ENCODE measurements at regions of chr12 and their contacts with region 1.

Region 1: GRCh38 chr12:57520053-57520871 is at the start of gene DDIT3:
- DNase-seq: peak; percentile 91
- ATAC-seq: peak; percentile 83
- H3K4me3 ChIP-seq: peak within 1 kb of the TSS; percentile 98
- H3K27ac ChIP-seq: peak within 1 kb of the TSS; percentile 99
- H3K4me1 ChIP-seq: peaks cover 29% of the 10 kb centered on the region
- H3K27me3 ChIP-seq: no peaks in the 10 kb centered on the region
- CTCF ChIP-seq: no peak
- EP300 ChIP-seq: peak in 1 of 2 experiments; percentile 58; a peak in 2 of 4 replicates
- POLR2A ChIP-seq: peak; percentile 91
- RAD21 ChIP-seq: no peak
- polyA plus RNA-seq, gene DDIT3: 26.8 to 28.9 TPM

Region 2: GRCh38 chr12:57476162-57476992 is 43.9 kb before region 1 on chr12:
- CTCF ChIA-PET with region 1: interaction called, 14 read pairs
- POLR2A ChIA-PET with region 1: interaction called, 11 read pairs
- RAD21 ChIA-PET with region 1: interaction called, 9 read pairs
- SMC1A ChIA-PET with region 1: interaction called, 9 read pairs
- in situ Hi-C with region 1: no loop called
- intact Hi-C with region 1: loop called (anchors 5 kb)
- DNase-seq: no peak
- ATAC-seq: peak; percentile 62
- H3K4me3 ChIP-seq: peak overlapping the region; percentile 92
- H3K27ac ChIP-seq: peak overlapping the region; percentile 85
- H3K4me1 ChIP-seq: peaks cover 34% of the 10 kb centered on the region
- H3K27me3 ChIP-seq: no peaks in the 10 kb centered on the region
- CTCF ChIP-seq: peak; percentile 48 to 81 (median 72)
- EP300 ChIP-seq: no peak
- POLR2A ChIP-seq: peak; percentile 73
- RAD21 ChIP-seq: peak; percentile 43

Region 3: DNA sequence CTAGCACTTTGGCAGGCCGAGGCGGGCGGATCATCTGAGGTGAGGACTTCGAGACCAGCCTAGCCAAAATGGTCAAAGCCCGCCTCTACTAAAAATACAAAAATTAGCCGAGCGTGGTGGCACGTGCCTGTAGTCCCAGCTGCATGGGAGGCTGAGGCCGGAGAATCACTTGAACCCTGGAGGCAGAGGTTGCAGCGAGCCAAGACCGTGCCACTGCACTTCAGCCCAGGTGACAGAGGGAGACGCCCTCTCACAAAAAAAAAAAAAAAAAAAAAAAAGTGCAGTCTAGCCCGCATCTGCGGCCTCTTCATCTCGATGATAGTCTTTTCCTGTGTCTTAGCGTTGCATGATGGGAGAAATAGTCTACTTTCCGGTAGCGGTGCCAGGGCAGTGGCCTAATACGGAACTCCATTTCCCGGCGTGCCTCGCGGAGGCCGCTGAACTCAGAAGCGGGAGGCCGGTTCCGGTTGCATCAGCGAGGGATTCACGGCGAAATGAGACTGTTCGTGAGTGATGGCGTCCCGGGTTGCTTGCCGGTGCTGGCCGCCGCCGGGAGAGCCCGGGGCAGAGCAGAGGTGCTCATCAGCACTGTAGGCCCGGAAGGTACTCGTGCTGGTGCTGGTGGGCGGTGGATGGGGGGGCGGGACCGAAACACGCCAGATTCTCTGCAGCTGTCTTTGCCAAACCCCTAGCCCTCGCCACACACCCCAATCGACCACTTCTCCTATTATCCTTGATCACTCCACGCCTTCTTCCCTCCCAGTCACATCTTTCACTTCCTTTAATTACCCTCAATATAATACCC is 32.5 kb before region 1 on chr12 and contains the start of gene MARS1:
- CTCF ChIA-PET with region 1: no interaction called
- POLR2A ChIA-PET with region 1: interaction called, 10 read pairs
- RAD21 ChIA-PET with region 1: interaction called, 3 read pairs
- SMC1A ChIA-PET with region 1: no interaction called
- in situ Hi-C with region 1: no loop called
- intact Hi-C with region 1: no loop called
- DNase-seq: peak; percentile 95
- ATAC-seq: peak; percentile 99
- H3K4me3 ChIP-seq: peak within 1 kb of the TSS; percentile 97
- H3K27ac ChIP-seq: peak within 1 kb of the TSS; percentile 76
- H3K4me1 ChIP-seq: peaks cover 6% of the 10 kb centered on the region
- H3K27me3 ChIP-seq: no peaks in the 10 kb centered on the region
- CTCF ChIP-seq: peak; percentile 34 to 41 (median 37); a peak in 4 of 6 replicates
- EP300 ChIP-seq: peak in 1 of 2 experiments; percentile 2; a peak in 1 of 4 replicates
- POLR2A ChIP-seq: peak; percentile 95
- RAD21 ChIP-seq: 0 out of 2 replicates have a peak, but pooled peaks have one; percentile 22
- polyA plus RNA-seq, gene MARS1: 72.3 to 129 TPM

Region 4: DNA sequence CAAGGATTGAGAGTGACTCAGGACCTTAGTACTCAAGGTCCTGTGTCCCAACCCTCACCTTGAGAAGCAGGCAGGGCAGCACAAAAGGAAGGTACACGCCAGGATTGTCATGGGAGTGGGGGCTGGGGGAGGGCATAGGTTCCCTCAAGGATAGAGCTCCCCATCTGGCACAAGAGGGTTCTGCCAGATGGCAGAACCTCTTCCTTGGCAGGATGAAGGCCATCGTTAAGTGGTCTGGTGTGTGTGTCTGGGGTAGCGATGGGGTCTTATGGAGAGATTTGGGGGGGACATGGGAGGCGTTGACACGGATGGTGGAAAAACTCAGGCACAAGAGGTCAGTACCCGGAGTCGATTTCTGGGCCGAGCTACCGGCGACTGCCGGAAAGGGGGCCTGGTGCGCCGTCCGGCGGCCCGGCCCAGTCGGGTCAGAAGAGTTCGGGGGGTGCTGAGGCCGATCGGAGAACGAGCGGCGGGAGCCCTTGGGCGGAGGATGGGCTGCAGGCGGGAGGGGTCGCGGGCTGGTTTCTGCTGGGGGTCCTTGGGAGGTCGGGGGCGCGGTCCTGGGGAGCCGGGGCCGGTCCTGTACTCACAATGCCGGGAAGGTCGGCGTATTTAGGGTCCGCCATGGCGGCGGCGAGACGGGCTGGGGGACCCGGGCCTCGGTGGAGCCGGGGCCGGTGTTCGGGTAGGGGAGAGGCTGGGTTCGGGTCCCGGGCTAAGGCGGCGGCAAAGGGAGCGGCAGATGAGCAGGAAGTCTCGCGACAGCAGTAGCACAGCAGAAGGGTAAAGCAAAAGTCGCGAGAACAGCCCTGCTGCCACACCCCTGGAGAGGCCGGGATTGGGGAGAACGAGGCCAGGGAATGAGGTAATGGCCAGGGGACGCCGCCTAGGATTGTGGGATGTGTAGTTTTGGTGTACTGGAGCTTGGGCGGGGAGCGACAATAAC is 26.4 kb after region 1 on chr12 and contains the start of gene DCTN2:
- CTCF ChIA-PET with region 1: interaction called, 3 read pairs
- POLR2A ChIA-PET with region 1: interaction called, 11 read pairs
- RAD21 ChIA-PET with region 1: interaction called, 11 read pairs
- SMC1A ChIA-PET with region 1: interaction called, 3 read pairs
- in situ Hi-C with region 1: no loop called
- intact Hi-C with region 1: loop called (anchors 2 kb)
- DNase-seq: peak; percentile 92
- ATAC-seq: peak; percentile 97
- H3K4me3 ChIP-seq: peak within 1 kb of the TSS; percentile 87
- H3K27ac ChIP-seq: peak within 1 kb of the TSS; percentile 67
- H3K4me1 ChIP-seq: peaks cover 9% of the 10 kb centered on the region; the same call in 1 of the 2 replicates
- H3K27me3 ChIP-seq: no peaks in the 10 kb centered on the region; a peak in 2 of 4 replicates
- CTCF ChIP-seq: peak; percentile 15 to 31 (median 30); a peak in 4 of 6 replicates
- EP300 ChIP-seq: no peak
- POLR2A ChIP-seq: peak; percentile 76
- RAD21 ChIP-seq: peak; percentile 20; the same call in 1 of the 2 replicates
- polyA plus RNA-seq, gene DCTN2: 32.3 to 60.7 TPM

Measured in GM12878 (cell line).